ENCODE measurements at regions of chr12 and their contacts with region 1.

Region 1: GRCh38 chr12:53295070-53295890 is at the start of gene PFDN5:
- DNase-seq: peak; percentile 84 to 89
- H3K4me3 ChIP-seq: peak within 1 kb of the TSS; percentile 87
- H3K4me3 Mint-ChIP-seq: peak within 1 kb of the TSS; percentile 93
- H3K27ac Mint-ChIP-seq: peak within 1 kb of the TSS; percentile 90
- H3K4me1 ChIP-seq: peaks cover 18% of the 10 kb centered on the region
- H3K4me1 Mint-ChIP-seq: peaks cover 11% of the 10 kb centered on the region
- H3K27me3 ChIP-seq: no peaks in the 10 kb centered on the region
- H3K27me3 Mint-ChIP-seq: no peaks in the 10 kb centered on the region
- CTCF ChIP-seq: no peak
- total RNA-seq, gene PFDN5: 251 and 264 TPM in 2 replicates

Region 2: DNA sequence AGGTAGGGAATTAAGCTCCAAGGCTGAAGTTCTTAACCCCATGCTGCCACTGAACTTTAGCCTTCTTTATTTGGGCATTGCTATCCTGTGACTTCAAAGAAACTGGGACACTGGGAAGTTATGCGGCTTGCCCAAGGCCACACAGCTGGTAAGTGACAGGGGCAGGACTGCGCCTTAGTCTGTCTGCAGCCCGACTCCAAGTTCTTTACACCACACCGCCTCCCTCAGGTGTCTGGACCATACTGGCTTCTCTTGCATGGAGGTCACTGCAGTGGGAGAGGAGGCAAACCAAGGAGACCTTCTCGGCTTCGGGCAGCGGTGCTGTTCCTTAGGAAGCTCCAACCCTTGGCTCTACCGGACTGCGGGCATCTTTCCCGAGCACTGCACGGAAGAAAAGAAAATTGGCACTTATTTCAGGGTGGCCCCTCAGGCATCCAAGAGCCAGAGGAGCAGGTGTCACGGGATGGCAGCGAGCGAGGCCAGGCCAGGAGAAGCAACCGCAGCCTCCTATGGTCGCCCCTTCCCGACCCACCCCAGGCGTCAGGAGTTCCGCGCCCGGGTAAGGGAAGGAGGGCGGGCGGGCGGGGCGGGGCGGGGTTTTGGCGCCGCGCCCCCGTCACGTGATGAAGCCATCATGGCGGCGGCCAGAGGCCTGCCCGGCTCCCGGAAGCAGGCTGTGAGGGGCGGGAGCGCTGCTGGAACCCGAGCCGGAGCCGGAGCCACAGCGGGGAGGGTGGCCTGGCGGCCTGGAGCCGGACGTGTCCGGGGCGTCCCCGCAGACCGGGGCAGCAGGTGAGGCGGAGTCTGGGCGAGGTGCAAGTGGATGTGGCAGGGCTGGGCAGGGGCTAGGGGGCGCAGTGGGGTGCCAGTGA is 43.6 kb before region 1 on chr12:
- CTCF ChIA-PET with region 1: interaction called, 3 read pairs
- POLR2A ChIA-PET with region 1: interaction called, 3 read pairs
- intact Hi-C with region 1: loop called (anchors 2 kb)
- DNase-seq: peak; percentile 82 to 85
- H3K4me3 ChIP-seq: peak overlapping the region; percentile 81
- H3K4me3 Mint-ChIP-seq: peak overlapping the region; percentile 93
- H3K27ac Mint-ChIP-seq: peak overlapping the region; percentile 84
- H3K4me1 ChIP-seq: peaks cover 18% of the 10 kb centered on the region
- H3K4me1 Mint-ChIP-seq: peaks cover 22% of the 10 kb centered on the region
- H3K27me3 ChIP-seq: no peaks in the 10 kb centered on the region
- H3K27me3 Mint-ChIP-seq: no peaks in the 10 kb centered on the region
- CTCF ChIP-seq: peak in 1 of 2 experiments; percentile 60

Measured in Caco-2 (cell line).